Right cardiac atrium (tissue), 5 donors: ENCODE measurements at regions of chr9 and their contacts with region 1.

Region 1: GRCh38 chr9:14627513-14627912 is 65.7 kb downstream of the ZDHHC21 start:
- DNase-seq: no peak
- ATAC-seq: no peak
- H3K4me3 ChIP-seq: no peak overlapping the region
- H3K27ac ChIP-seq: no peak overlapping the region
- H3K4me1 ChIP-seq: no peaks in the 10 kb centered on the region
- H3K27me3 ChIP-seq: no peaks in the 10 kb centered on the region

Region 2: DNA sequence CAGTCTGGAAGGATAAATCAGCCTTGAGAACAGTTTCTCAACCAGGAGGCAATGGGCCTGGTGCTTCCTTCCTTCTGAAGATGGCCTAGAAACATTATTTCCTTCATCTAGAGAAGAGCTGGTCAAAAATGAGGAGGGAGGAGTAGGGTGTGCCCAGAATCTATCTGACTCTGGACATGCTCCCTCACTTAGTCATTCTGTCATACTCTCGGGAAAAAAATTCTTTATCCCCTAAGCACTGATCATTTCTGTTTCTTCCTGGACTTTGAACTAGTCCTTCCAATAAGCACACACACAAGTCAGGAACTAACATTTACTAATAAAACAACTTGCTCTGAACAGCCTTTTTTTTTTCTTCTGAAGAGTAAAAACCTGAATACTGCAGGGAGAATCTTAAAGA is 94.8 kb before region 1 on chr9:
- intact Hi-C with region 1: loop called in 1 of 4 experiments (anchors 10 kb)
- DNase-seq: no peak
- ATAC-seq: no peak
- H3K4me3 ChIP-seq: no peak overlapping the region
- H3K27ac ChIP-seq: no peak overlapping the region
- H3K4me1 ChIP-seq: peaks cover 8% of the 10 kb centered on the region
- H3K27me3 ChIP-seq: no peaks in the 10 kb centered on the region